PC-3 (cell line): ENCODE measurements at regions of chr5 and their contacts with region 1.

Region 1: DNA sequence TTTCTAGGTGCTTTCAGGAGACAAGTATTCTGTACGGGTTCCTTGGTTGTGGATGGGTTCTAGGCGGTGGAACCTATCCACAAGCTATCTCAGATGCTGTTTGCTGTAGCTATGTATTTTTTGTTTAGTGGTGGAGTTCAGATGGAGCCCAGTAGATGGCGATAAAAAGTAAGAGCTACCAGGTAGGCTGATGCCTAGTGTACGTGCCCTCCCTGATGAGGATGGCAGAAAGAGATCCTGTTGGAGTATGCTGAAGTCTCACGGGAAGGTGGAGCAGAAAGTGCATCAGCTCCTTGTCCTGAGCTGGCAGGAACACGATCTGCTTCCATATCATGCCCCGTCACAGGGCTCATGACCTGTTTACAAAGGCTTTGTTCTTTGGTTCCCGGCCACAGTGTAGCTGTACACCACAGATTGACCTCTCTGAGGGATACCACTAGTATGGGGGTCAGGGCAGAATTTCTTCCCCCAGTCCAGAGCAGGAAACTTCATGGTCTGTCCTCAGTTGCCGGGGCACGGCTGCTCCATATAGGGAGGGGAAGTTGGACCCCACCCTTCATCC is 12.6 kb upstream of the UGT3A2 start:
- DNase-seq: peak; percentile 82
- ATAC-seq: peak; percentile 99
- H3K4me3 ChIP-seq: peak overlapping the region; percentile 9; the same call in 1 of the 2 replicates
- H3K27ac ChIP-seq: no peak overlapping the region
- H3K4me1 ChIP-seq: peaks cover 5% of the 10 kb centered on the region; the same call in 1 of the 2 replicates
- H3K27me3 ChIP-seq: peaks cover 29% of the 10 kb centered on the region
- CTCF ChIP-seq: peak; percentile 83

Region 2: GRCh38 chr5:35988529-35988928 is 90.8 kb before region 1 on chr5:
- CTCF ChIA-PET with region 1: no interaction called
- POLR2A ChIA-PET with region 1: no interaction called
- intact Hi-C with region 1: no loop called
- DNase-seq: no peak
- ATAC-seq: no peak
- H3K4me3 ChIP-seq: no peak overlapping the region
- H3K27ac ChIP-seq: no peak overlapping the region
- H3K4me1 ChIP-seq: no peaks in the 10 kb centered on the region
- H3K27me3 ChIP-seq: peaks cover 81% of the 10 kb centered on the region
- CTCF ChIP-seq: no peak

Region 3: DNA sequence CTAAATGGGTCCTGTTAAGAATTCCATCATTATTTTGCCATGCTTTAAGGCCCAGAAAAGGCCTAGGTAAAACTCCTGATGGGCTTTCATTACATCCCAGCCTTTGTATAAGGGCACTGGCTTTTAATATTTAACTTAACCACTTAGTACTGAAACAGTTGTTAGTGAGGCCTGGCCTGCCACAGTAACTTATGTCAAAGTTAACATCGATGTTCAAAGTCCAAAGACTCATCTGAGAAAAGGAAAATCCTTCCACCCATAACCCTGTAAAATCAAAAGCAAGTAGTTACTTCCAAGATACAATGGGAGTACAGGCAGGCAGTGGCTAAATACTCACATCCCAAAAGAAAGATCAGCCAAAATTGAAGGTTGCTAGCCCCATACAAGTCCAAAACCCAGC is 73.1 kb before region 1 on chr5:
- CTCF ChIA-PET with region 1: no interaction called
- POLR2A ChIA-PET with region 1: no interaction called
- intact Hi-C with region 1: no loop called
- DNase-seq: no peak
- ATAC-seq: no peak
- H3K4me3 ChIP-seq: no peak overlapping the region
- H3K27ac ChIP-seq: no peak overlapping the region
- H3K4me1 ChIP-seq: no peaks in the 10 kb centered on the region
- H3K27me3 ChIP-seq: peaks cover 31% of the 10 kb centered on the region
- CTCF ChIP-seq: no peak

Region 4: GRCh38 chr5:36089989-36090564 is 10.8 kb after region 1 on chr5:
- CTCF ChIA-PET with region 1: interaction called, 32 read pairs
- POLR2A ChIA-PET with region 1: no interaction called
- intact Hi-C with region 1: no loop called
- DNase-seq: peak; percentile 57
- ATAC-seq: peak; percentile 87
- H3K4me3 ChIP-seq: no peak overlapping the region
- H3K27ac ChIP-seq: no peak overlapping the region
- H3K4me1 ChIP-seq: no peaks in the 10 kb centered on the region
- H3K27me3 ChIP-seq: no peaks in the 10 kb centered on the region
- CTCF ChIP-seq: peak; percentile 56

Region 5: GRCh38 chr5:36108758-36109460 is 29.6 kb after region 1 on chr5:
- CTCF ChIA-PET with region 1: interaction called, 10 read pairs
- POLR2A ChIA-PET with region 1: no interaction called
- intact Hi-C with region 1: loop called (anchors 1 kb)
- DNase-seq: peak; percentile 69
- ATAC-seq: peak; percentile 94
- H3K4me3 ChIP-seq: no peak overlapping the region
- H3K27ac ChIP-seq: peak overlapping the region; percentile 20; the same call in 1 of the 2 replicates
- H3K4me1 ChIP-seq: peaks cover 16% of the 10 kb centered on the region
- H3K27me3 ChIP-seq: no peaks in the 10 kb centered on the region
- CTCF ChIP-seq: no peak

Region 6: GRCh38 chr5:36151434-36152323 is 72.4 kb after region 1 on chr5 and contains the starts of genes LMBRD2 and SKP2:
- CTCF ChIA-PET with region 1: interaction called, 25 read pairs
- POLR2A ChIA-PET with region 1: interaction called, 6 read pairs
- intact Hi-C with region 1: loop called (anchors 2 kb)
- DNase-seq: peak; percentile 99
- ATAC-seq: peak; percentile 97
- H3K4me3 ChIP-seq: peak within 1 kb of the TSS; percentile 84
- H3K27ac ChIP-seq: peak within 1 kb of the TSS; percentile 4; the same call in 1 of the 2 replicates
- H3K4me1 ChIP-seq: peaks cover 38% of the 10 kb centered on the region
- H3K27me3 ChIP-seq: no peaks in the 10 kb centered on the region
- CTCF ChIP-seq: no peak
- total RNA-seq, gene LMBRD2: 9.1 and 21.1 TPM in 2 replicates
- total RNA-seq, gene SKP2: 32.0 and 33.2 TPM in 2 replicates

Region 7: DNA sequence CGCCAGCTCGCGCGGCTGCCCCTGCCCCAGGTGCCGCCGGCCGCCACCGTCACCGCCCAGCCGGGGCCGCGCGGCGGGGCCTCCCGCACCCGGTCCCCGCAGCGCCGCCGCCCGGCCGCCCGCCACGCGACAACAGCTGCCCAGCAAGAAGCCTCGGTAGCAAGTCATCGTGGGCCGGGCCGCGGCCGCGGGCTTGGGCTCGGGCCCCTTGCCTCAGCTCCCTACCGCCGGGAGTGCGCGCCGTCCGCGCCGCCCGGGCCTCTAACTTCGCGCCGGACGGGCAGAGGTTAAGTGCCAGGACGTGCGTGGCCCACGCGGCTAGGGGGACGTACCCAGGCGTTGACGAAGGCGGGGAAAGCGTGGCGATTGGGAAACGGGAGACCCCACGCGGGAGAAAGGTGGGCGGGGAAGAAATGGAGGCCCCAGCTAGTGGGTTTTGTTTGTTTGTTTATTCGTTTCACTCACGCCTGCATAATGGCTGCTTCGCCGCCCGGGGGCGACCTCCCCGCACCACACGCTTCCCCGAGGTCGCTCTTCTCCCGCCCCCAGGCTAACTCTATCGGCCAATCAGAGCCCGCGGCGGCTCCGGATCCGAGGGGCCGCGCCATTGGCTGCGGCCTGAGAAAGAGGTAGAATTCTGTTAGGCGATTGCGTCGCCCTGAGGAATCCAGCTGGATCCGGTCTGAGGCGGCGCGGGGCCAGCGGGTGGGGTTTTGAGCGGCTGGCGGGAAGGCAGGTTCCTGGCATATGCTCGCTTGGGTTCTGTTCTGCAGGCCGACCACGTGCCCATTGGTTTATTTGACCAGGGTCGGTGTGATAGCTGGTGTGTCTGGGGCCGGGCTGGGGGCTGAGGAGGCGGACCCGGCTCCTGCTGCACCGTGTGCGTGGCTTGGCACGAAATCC is 162.6 kb after region 1 on chr5 and contains the start of gene NADK2:
- CTCF ChIA-PET with region 1: interaction called, 18 read pairs
- POLR2A ChIA-PET with region 1: no interaction called
- intact Hi-C with region 1: loop called (anchors 2 kb)
- DNase-seq: peak; percentile 97
- ATAC-seq: peak; percentile 75
- H3K4me3 ChIP-seq: peak within 1 kb of the TSS; percentile 75
- H3K27ac ChIP-seq: peak within 1 kb of the TSS; percentile 69
- H3K4me1 ChIP-seq: peaks cover 38% of the 10 kb centered on the region
- H3K27me3 ChIP-seq: no peaks in the 10 kb centered on the region
- CTCF ChIP-seq: peak; percentile 58
- total RNA-seq, gene NADK2: 17.7 and 22.9 TPM in 2 replicates

Region 8: DNA sequence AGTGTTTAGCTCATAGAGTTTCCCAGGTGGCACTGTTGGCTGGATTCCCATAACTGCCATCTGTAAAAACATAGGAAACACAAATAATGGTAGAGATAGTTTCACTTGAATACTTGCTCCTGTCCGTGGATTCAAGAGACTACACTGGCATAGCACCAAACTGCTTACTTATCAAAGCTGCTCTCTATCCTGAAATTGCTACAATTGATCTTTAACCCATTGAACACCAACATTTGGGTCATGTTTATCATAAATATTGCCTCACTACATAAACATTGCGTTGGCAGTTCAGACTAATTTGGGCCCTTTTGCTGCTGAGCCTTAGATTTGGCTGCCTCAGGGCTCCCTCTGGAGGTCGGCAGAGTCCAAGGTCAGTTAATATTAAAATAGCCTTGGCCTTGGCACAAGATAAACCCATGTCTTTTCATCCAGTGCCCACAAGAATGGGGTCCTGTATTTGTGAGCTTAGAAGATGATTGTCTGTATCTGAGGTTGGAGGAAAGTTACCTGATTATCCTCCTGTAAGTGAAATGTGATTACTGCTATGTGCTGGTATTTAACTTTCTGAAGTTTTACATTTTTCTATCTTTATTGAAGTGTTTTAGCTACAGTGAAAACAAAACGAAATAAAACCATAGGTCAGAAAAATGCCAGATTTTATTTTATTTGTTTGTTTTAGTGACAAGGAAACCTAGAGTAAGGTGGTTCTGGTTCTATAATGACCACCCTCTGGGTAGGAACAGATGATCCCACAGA is 226.5 kb after region 1 on chr5:
- CTCF ChIA-PET with region 1: interaction called, 7 read pairs
- POLR2A ChIA-PET with region 1: no interaction called
- intact Hi-C with region 1: loop called (anchors 1 kb)
- DNase-seq: peak; percentile 63
- ATAC-seq: peak; percentile 65
- H3K4me3 ChIP-seq: no peak overlapping the region
- H3K27ac ChIP-seq: no peak overlapping the region
- H3K4me1 ChIP-seq: peaks cover 19% of the 10 kb centered on the region
- H3K27me3 ChIP-seq: peaks cover 21% of the 10 kb centered on the region
- CTCF ChIP-seq: peak; percentile 90